Stomach (tissue), 19 donors: ENCODE measurements at regions of chr19 and their contacts with region 1.

Region 1: GRCh38 chr19:38333245-38333644 is 2.4 kb upstream of the CATSPERG start:
- DNase-seq: no peak
- H3K4me3 ChIP-seq: no peak overlapping the region
- H3K27ac ChIP-seq: no peak overlapping the region
- H3K4me1 ChIP-seq: peaks cover 7 to 19% (median 14%) of the 10 kb centered on the region in 4 donors
- H3K27me3 ChIP-seq: no peaks in the 10 kb centered on the region
- CTCF ChIP-seq: no peak
- EP300 ChIP-seq: no peak
- POLR2A ChIP-seq: no peak

Region 2: DNA sequence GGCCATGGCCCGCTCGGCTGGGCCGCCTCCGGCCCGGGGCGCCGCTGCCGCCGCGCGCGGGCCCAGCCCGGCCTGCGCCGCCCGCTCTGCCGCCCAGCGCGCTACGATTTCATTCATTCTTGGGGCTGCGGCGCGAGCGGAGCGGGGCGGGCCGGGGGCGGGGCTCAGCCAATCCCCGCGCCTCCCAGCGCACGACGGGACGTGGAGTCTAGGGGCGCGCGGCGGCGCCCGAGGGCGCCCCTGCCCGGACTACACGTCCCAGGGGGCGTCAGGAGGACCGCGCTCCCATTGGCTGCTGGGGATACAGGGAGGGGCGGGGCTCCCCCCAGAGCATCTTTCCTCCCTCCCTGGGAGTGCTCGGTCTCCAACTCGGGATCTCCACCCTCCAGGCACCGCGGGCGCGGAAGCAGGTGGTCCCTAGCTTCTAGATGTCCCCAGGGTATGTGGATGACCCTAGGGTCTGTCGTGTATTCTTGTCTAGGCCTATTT is 103.6 kb before region 1 on chr19:
- intact Hi-C with region 1: loop called (anchors 5 kb)
- DNase-seq: peak; percentile 47 to 93
- H3K4me3 ChIP-seq: peak overlapping the region in 3 of 4 donors; percentile 18 to 24 (median 23)
- H3K27ac ChIP-seq: no peak overlapping the region
- H3K4me1 ChIP-seq: peaks cover 13 to 16% (median 16%) of the 10 kb centered on the region in 4 donors
- H3K27me3 ChIP-seq: peaks cover 30 to 100% (median 51%) of the 10 kb centered on the region in 3 donors
- CTCF ChIP-seq: no peak
- EP300 ChIP-seq: no peak
- POLR2A ChIP-seq: no peak

Region 3: DNA sequence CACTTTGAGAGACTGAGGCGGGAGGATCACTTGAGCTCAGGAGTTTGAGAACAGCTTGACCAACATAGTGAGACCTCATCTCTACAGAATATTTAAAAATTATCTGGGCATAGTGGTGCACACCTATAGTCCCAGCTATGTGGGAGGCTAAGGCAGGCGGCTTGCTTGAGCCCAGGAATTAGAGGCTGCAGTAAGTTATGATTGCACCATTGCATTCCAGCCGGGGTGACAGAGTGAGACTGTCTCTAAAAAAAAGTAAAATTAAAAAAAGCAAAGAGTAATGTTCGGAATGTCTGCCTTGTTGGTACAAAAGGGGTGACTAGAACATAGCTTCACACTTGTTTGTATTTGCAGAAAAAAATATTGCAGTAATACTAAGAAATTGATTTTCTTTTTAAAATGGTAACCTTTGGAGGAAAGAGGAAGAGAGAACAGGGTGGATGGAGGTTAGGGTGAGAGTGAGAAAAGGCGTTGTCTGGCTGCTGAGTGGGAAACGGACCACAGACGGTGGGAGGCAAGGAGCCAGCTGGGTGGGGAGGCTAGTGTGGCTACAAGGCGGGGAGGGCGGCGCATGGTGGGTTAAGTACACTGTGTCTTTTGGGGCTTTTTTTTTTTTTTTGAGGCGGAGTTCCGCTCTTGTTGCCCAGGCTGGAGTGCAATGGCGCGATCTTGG is 87.3 kb before region 1 on chr19:
- intact Hi-C with region 1: loop called (anchors 5 kb)
- DNase-seq: no peak
- H3K4me3 ChIP-seq: no peak overlapping the region
- H3K27ac ChIP-seq: peak overlapping the region in 4 of 5 donors; percentile 57 to 92 (median 64)
- H3K4me1 ChIP-seq: peaks cover 24 to 67% (median 50%) of the 10 kb centered on the region in 4 donors
- H3K27me3 ChIP-seq: no peaks in the 10 kb centered on the region
- CTCF ChIP-seq: no peak
- EP300 ChIP-seq: no peak
- POLR2A ChIP-seq: no peak

Region 4: GRCh38 chr19:38277969-38278680 is 55.1 kb before region 1 on chr19:
- intact Hi-C with region 1: no loop called
- DNase-seq: peak; percentile 39 to 50
- H3K4me3 ChIP-seq: no peak overlapping the region
- H3K27ac ChIP-seq: peak overlapping the region; percentile 2 to 80 (median 67)
- H3K4me1 ChIP-seq: peaks cover 48 to 70% (median 59%) of the 10 kb centered on the region in 4 donors
- H3K27me3 ChIP-seq: no peaks in the 10 kb centered on the region
- CTCF ChIP-seq: no peak
- EP300 ChIP-seq: no peak
- POLR2A ChIP-seq: no peak